Endothelial cell of umbilical vein (primary cell): ENCODE measurements at regions of chr20 and their contacts with region 1.

Region 1: DNA sequence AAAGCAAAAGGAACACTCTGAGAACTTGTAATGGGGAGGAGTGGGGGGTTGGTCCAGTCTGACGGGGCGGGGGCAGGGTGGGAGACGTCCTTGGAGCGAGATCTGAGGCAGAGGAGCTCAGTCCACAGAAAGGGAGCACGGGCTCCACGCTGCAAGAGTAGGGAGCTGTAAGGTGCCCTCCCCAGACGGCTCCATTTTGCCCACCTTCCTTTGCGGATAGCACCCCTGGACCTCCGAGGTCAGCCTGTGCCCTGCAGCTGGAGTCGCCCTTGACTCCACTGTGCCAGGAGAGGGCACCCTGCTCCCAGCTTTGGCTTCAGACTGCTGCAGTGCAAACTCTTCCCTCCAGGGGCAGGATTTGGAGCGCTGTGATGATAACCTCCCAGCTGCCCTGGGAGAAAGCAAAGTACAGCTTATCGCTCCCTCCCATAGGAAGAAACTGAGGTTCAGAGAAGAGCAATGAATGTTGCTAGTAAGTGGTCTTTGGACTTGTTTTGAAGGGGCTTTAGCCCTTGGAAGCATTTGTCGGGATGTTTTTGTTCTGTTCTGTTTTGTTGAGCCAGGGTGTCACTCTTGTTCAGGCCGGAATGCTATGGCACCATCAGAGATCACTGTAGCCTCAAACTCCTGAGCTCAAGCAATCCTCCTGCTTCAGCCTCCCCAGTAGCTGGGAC is 9.5 kb upstream of the AHCY start:
- DNase-seq: peak; percentile 87
- H3K4me3 ChIP-seq: peak overlapping the region in 1 of 3 experiments; percentile 11
- H3K27ac ChIP-seq: no peak overlapping the region
- H3K4me1 ChIP-seq: peaks cover 9% of the 10 kb centered on the region
- H3K27me3 ChIP-seq: no peaks in the 10 kb centered on the region
- CTCF ChIP-seq: peak; percentile 100
- POLR2A ChIP-seq: no peak

Region 2: DNA sequence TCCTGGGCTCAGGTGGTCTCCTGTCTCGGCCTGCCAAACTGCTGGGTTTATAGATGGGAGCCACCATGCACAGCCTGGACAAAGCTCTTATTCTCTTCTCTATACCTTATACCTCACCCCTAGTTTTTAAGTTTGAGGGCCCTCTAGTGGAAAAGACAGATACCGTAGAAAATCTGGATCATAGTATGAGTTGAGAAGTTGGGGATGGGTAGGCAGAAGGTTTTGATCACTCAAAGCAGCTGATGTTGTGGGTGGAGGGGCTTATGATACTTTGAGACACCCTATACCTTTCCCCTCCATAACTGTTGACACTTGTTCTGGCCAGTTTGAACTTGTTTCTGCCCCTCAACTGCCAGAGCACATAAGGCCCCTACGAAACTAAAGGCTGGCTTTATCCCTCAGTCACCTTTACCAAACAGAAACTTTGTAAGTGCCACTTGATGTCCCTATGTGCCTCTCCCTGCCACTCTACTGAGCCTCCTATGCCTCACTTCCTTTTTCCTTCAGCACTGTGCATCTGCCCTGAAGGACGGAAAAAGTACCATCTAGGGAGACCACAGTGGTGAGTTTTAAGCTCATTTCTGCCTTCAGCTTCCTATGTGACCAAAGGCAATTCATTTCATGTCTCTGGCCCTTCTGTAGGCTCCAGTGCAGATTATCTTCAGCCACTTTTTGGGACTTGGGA is 290.4 kb before region 1 on chr20:
- CTCF ChIA-PET with region 1: no interaction called
- POLR2A ChIA-PET with region 1: no interaction called
- dilution Hi-C with region 1: no loop called
- intact Hi-C with region 1: no loop called
- DNase-seq: peak; percentile 35
- H3K4me3 ChIP-seq: no peak overlapping the region
- H3K27ac ChIP-seq: no peak overlapping the region
- H3K4me1 ChIP-seq: no peaks in the 10 kb centered on the region
- H3K27me3 ChIP-seq: no peaks in the 10 kb centered on the region
- CTCF ChIP-seq: peak; percentile 17 to 33
- POLR2A ChIP-seq: no peak

Region 3: DNA sequence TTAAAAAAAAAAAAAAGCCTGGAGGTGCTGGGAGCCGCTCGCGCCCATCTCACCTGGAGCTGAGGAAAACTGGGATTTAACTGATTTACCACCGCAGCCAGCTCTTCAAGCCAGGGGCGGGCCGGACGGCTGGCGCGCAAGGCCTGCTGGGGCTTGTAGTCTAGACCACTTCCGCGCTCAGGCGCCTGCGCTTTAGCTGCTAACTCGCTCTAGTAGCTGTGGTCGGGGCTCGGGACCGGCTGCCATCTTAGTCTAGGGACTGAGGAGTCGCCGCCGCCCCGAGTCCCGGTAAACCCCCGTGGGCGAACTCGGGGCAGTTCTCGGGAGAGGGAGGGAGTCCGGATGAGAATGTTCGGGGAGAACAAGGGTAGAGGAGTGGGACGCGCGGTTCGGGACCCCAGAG is 50.4 kb after region 1 on chr20 and contains the start of gene ITCH:
- CTCF ChIA-PET with region 1: interaction called, 40 read pairs
- POLR2A ChIA-PET with region 1: interaction called, 9 read pairs
- dilution Hi-C with region 1: no loop called
- intact Hi-C with region 1: loop called (anchors 2 kb)
- DNase-seq: peak; percentile 95
- H3K4me3 ChIP-seq: peak within 1 kb of the TSS; percentile 84 to 97 (median 88)
- H3K27ac ChIP-seq: peak within 1 kb of the TSS; percentile 76
- H3K4me1 ChIP-seq: peaks cover 14% of the 10 kb centered on the region
- H3K27me3 ChIP-seq: no peaks in the 10 kb centered on the region
- CTCF ChIP-seq: no peak
- POLR2A ChIP-seq: peak; percentile 91
- total RNA-seq, gene ITCH: 52.2 and 57.4 TPM in 2 replicates

Region 4: GRCh38 chr20:34410336-34410735 is 97.7 kb after region 1 on chr20:
- CTCF ChIA-PET with region 1: interaction called, 19 read pairs
- POLR2A ChIA-PET with region 1: no interaction called
- dilution Hi-C with region 1: no loop called
- intact Hi-C with region 1: loop called (anchors 5 kb)
- DNase-seq: no peak
- H3K4me3 ChIP-seq: no peak overlapping the region
- H3K27ac ChIP-seq: no peak overlapping the region
- H3K4me1 ChIP-seq: peaks cover 13% of the 10 kb centered on the region
- H3K27me3 ChIP-seq: no peaks in the 10 kb centered on the region
- CTCF ChIP-seq: no peak
- POLR2A ChIP-seq: no peak

Region 5: GRCh38 chr20:34445177-34446065 is 132.7 kb after region 1 on chr20:
- CTCF ChIA-PET with region 1: interaction called, 17 read pairs
- POLR2A ChIA-PET with region 1: no interaction called
- dilution Hi-C with region 1: no loop called
- intact Hi-C with region 1: no loop called
- DNase-seq: no peak
- H3K4me3 ChIP-seq: no peak overlapping the region
- H3K27ac ChIP-seq: no peak overlapping the region
- H3K4me1 ChIP-seq: no peaks in the 10 kb centered on the region
- H3K27me3 ChIP-seq: no peaks in the 10 kb centered on the region
- CTCF ChIP-seq: no peak
- POLR2A ChIP-seq: no peak

Region 6: GRCh38 chr20:34506480-34506879 is 193.8 kb after region 1 on chr20:
- CTCF ChIA-PET with region 1: interaction called, 12 read pairs
- POLR2A ChIA-PET with region 1: no interaction called
- dilution Hi-C with region 1: no loop called
- intact Hi-C with region 1: no loop called
- DNase-seq: no peak
- H3K4me3 ChIP-seq: no peak overlapping the region
- H3K27ac ChIP-seq: no peak overlapping the region
- H3K4me1 ChIP-seq: no peaks in the 10 kb centered on the region
- H3K27me3 ChIP-seq: no peaks in the 10 kb centered on the region
- CTCF ChIP-seq: no peak
- POLR2A ChIP-seq: no peak

Region 7: GRCh38 chr20:34558320-34559218 is 245.9 kb after region 1 on chr20 and contains the start of gene MAP1LC3A:
- CTCF ChIA-PET with region 1: interaction called, 16 read pairs
- POLR2A ChIA-PET with region 1: no interaction called
- dilution Hi-C with region 1: no loop called
- intact Hi-C with region 1: no loop called
- DNase-seq: peak; percentile 93
- H3K4me3 ChIP-seq: peak within 1 kb of the TSS; percentile 60 to 92 (median 73)
- H3K27ac ChIP-seq: peak within 1 kb of the TSS; percentile 77
- H3K4me1 ChIP-seq: no peaks in the 10 kb centered on the region
- H3K27me3 ChIP-seq: no peaks in the 10 kb centered on the region
- CTCF ChIP-seq: no peak
- POLR2A ChIP-seq: no peak
- total RNA-seq, gene MAP1LC3A: 32.1 and 32.7 TPM in 2 replicates